Activated T-helper 1 cell treated with anti-CD3 and anti-CD28 coated beads, Interleukin-12 subunit alpha, Interleukin-12 subunit beta, Interleukin-2, Interleukin-4 antibody, amounts not matched to agents 30 ng/mL and 10 ng/mL and 1 ng/mL, durations not matched to agents 14 hours and 24 hours and 36 hours (primary cell): ENCODE measurements at regions of chr3 and their contacts with region 1.

Region 1: DNA sequence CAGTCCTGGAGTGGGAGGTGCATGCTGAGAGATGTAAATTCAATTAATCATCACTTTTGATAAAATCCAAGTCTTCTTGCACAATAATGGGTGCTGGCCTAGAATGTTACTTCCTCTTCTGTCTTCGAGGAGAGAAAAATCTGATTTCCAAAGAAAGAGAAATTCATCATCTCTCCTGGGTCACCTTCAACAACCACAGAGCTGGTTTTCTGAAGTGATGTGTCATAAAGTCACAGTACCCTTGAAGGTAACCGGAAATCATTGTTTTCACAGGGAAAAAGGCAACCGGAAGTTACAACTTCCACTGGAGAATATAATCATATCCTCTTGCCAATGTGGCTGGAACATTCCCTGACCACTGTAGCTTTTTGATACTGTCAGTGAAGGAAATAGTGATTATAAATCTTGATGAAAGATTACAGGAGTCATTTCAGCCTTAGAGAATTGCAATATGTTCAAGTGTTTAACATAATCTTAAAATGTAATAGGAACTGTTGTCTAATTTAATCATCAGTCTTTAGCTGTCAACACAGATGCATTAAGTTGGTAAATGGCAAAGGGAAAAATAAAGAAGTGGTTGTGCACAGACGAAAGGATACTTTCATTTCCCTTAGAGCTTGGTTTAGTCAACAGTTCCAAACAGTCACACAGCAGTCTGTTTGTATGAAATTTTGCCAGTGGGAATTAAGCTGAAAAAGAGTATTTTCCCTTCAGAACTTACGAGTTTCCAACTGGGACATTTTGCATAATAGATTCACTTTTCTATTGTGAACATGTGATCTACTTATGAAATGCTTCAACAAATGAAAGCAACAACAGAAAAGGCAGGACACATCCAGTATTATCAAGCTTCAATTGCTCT is 106.5 kb upstream of the SLC4A7 start:
- DNase-seq: no peak
- H3K4me3 Mint-ChIP-seq: peak overlapping the region; percentile 31
- H3K27ac Mint-ChIP-seq: peak overlapping the region; percentile 76
- H3K4me1 Mint-ChIP-seq: peaks cover 28% of the 10 kb centered on the region
- H3K27me3 Mint-ChIP-seq: no peaks in the 10 kb centered on the region

Region 2: DNA sequence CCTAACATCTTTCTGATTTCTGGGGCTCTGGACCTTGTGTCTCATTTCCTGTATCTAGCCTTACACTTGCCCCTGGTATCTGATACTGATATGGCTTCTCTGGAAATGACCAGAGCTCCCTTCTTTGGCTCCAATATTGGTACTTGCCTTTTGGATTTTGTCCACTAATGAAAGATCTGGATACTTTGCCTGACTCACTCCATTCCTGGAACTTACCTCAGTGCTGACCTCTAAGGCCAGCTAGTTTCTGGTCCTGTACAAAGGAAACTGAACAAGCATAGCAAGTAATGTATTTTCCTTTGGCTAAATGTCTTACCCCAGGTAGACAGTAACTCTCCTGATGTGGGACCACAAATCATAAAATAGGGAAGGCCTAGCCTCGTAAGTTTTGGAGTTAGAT is 12.6 kb before region 1 on chr3:
- intact Hi-C with region 1: loop called (anchors 1 kb)
- DNase-seq: no peak
- H3K4me3 Mint-ChIP-seq: no peak overlapping the region
- H3K27ac Mint-ChIP-seq: no peak overlapping the region
- H3K4me1 Mint-ChIP-seq: peaks cover 21% of the 10 kb centered on the region
- H3K27me3 Mint-ChIP-seq: no peaks in the 10 kb centered on the region

Region 3: GRCh38 chr3:27632431-27633223 is 42.0 kb after region 1 on chr3:
- intact Hi-C with region 1: loop called (anchors 1 kb)
- DNase-seq: peak; percentile 25
- H3K4me3 Mint-ChIP-seq: peak overlapping the region; percentile 86
- H3K27ac Mint-ChIP-seq: peak overlapping the region; percentile 82
- H3K4me1 Mint-ChIP-seq: peaks cover 41% of the 10 kb centered on the region
- H3K27me3 Mint-ChIP-seq: no peaks in the 10 kb centered on the region